ENCODE measurements at regions of chr2 and their contacts with region 1.

Region 1: DNA sequence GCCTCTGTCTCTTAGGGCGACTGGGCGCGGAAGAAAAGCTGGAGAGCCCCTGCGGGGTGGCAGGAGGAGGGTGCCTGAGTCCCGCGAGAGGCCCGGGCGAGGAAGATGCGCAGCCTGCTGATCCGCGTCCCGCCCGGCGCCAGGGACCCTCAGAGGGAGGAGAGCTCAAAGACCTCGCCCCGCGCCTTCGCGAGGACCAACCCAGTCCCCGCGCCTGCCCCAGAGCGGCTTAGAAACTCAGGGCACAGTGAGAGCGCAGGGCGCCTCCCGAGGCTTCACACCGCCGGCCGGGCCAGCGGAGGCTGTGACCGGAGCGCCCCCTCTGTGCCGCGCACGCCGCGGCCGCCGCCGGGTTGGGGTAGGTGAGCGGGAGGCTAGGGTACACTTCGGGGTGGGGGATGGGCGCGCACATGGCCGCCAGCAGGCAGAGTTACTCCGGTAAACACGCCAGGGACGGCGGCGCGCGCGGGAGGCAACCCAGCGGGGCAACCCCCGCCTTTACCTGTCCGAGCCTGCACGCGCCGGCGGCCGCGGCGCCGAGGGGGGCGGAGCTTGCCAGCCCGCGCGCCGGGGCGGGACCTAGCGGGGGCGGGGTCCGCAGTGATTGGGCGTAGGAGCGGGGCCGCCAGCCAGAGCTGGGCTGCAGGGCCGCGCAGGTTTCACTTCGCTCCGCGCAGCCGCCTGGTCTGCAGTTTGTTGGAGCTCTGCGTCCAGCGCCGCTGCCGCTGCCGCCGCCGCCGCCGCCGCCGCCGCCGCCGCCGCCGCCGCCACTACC is at the start of gene BCL2L11:
- DNase-seq: peak; percentile 90
- H3K4me3 Mint-ChIP-seq: peak within 1 kb of the TSS; percentile 91
- H3K27ac Mint-ChIP-seq: peak within 1 kb of the TSS; percentile 93
- H3K4me1 Mint-ChIP-seq: peaks cover 8% of the 10 kb centered on the region
- H3K27me3 Mint-ChIP-seq: no peaks in the 10 kb centered on the region
- CTCF ChIP-seq: peak; percentile 9
- total RNA-seq, gene BCL2L11: 5.8 and 8.4 TPM in 2 replicates

Region 2: GRCh38 chr2:110812726-110813645 is 307.5 kb before region 1 on chr2:
- CTCF ChIA-PET with region 1: interaction called, 16 read pairs
- POLR2A ChIA-PET with region 1: interaction called, 10 read pairs
- intact Hi-C with region 1: loop called (anchors 2 kb)
- DNase-seq: no peak
- H3K4me3 Mint-ChIP-seq: no peak overlapping the region
- H3K27ac Mint-ChIP-seq: no peak overlapping the region
- H3K4me1 Mint-ChIP-seq: peaks cover 14% of the 10 kb centered on the region
- H3K27me3 Mint-ChIP-seq: peaks cover 35% of the 10 kb centered on the region
- CTCF ChIP-seq: no peak

Region 3: DNA sequence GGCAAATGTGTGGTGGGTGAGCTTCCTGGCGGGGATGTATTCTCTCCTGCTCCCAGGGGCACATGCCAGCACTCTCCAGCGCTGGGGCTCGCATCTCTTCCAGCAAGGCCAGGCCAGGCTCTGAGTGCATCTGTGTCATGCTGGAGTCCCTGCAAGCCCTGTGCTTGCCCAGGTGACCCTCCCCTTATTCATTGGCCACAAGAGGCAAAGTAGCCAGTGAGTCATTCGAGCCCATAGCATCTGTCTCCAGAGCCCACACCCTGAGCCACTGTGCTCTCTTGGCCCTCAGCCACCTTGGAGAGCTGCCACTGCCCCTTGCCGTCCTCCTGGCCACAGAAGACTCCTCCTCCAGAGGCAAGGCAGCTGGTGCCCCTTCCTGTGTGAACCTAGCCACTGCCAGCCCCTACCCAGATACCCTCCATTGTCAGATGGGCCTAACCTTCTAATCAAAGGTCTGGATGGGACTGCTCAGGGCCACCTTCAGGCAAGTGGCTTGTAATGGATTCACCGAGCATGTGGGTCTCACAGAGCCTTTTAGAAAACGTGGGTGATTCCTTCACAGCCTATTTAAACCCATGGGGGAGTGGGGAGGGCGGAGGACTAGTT is 250.9 kb before region 1 on chr2:
- CTCF ChIA-PET with region 1: no interaction called
- POLR2A ChIA-PET with region 1: no interaction called
- intact Hi-C with region 1: no loop called
- DNase-seq: peak; percentile 66
- H3K4me3 Mint-ChIP-seq: no peak overlapping the region
- H3K27ac Mint-ChIP-seq: no peak overlapping the region
- H3K4me1 Mint-ChIP-seq: peaks cover 9% of the 10 kb centered on the region
- H3K27me3 Mint-ChIP-seq: peaks cover 42% of the 10 kb centered on the region
- CTCF ChIP-seq: no peak

Region 4: GRCh38 chr2:110886826-110887573 is 233.4 kb before region 1 on chr2:
- CTCF ChIA-PET with region 1: no interaction called
- POLR2A ChIA-PET with region 1: no interaction called
- intact Hi-C with region 1: no loop called
- DNase-seq: no peak
- H3K4me3 Mint-ChIP-seq: no peak overlapping the region
- H3K27ac Mint-ChIP-seq: no peak overlapping the region
- H3K4me1 Mint-ChIP-seq: peaks cover 5% of the 10 kb centered on the region
- H3K27me3 Mint-ChIP-seq: peaks cover 7% of the 10 kb centered on the region
- CTCF ChIP-seq: no peak

Region 5: GRCh38 chr2:111139637-111140317 is 19.3 kb after region 1 on chr2:
- CTCF ChIA-PET with region 1: interaction called, 4 read pairs
- POLR2A ChIA-PET with region 1: interaction called, 25 read pairs
- intact Hi-C with region 1: no loop called
- DNase-seq: peak; percentile 77
- H3K4me3 Mint-ChIP-seq: no peak overlapping the region
- H3K27ac Mint-ChIP-seq: peak overlapping the region; percentile 42
- H3K4me1 Mint-ChIP-seq: peaks cover 21% of the 10 kb centered on the region
- H3K27me3 Mint-ChIP-seq: no peaks in the 10 kb centered on the region
- CTCF ChIP-seq: no peak

Region 6: GRCh38 chr2:111168528-111169239 is 48.2 kb after region 1 on chr2:
- CTCF ChIA-PET with region 1: interaction called, 5 read pairs
- POLR2A ChIA-PET with region 1: interaction called, 23 read pairs
- intact Hi-C with region 1: no loop called
- DNase-seq: peak; percentile 76
- H3K4me3 Mint-ChIP-seq: peak overlapping the region; percentile 14
- H3K27ac Mint-ChIP-seq: no peak overlapping the region
- H3K4me1 Mint-ChIP-seq: peaks cover 22% of the 10 kb centered on the region
- H3K27me3 Mint-ChIP-seq: no peaks in the 10 kb centered on the region
- CTCF ChIP-seq: no peak

Region 7: DNA sequence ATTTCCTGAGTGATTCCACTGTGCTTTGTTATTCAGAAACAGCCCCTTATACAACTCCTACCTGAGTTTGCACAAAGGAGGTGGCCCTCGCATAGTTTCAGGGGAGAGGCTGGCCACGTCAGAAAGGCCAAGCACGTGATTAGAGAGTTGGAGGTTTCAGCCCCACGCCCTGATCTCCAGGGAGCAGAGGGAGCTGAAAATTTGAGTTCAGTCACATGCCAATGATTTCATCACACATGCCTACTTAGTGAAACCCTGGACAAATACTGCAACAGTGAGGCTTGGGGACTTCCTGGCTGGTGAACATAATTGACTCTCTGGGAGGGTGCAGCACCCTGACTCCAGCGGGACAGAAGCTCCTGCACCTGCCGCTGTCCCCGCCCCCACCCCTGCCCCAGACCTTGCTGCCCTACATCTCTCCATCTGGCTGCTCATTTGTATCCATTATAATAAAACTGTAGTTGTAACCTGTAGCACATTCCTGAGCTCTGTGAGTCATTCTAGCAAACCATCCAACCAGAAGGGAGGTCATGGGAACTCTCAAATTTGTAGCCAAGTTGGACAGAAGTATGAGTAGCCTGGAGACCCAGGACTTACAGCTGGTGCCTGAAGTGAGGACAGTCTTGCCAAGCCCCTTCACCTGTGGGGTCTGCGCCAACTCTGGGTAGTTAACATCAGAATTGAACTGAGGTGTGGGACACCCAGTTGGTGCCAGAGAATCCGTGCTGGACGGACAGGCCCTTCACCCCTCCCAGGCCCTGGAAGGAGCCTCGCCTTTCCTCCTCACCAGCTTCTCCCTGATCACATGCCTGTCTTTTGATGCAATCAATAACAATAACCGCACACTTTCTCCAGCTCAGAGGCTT is 539.2 kb after region 1 on chr2:
- CTCF ChIA-PET with region 1: no interaction called
- POLR2A ChIA-PET with region 1: interaction called, 14 read pairs
- intact Hi-C with region 1: no loop called
- DNase-seq: peak; percentile 97
- H3K4me3 Mint-ChIP-seq: peak overlapping the region; percentile 45
- H3K27ac Mint-ChIP-seq: peak overlapping the region; percentile 99
- H3K4me1 Mint-ChIP-seq: peaks cover 50% of the 10 kb centered on the region
- H3K27me3 Mint-ChIP-seq: no peaks in the 10 kb centered on the region
- CTCF ChIP-seq: no peak

Region 8: DNA sequence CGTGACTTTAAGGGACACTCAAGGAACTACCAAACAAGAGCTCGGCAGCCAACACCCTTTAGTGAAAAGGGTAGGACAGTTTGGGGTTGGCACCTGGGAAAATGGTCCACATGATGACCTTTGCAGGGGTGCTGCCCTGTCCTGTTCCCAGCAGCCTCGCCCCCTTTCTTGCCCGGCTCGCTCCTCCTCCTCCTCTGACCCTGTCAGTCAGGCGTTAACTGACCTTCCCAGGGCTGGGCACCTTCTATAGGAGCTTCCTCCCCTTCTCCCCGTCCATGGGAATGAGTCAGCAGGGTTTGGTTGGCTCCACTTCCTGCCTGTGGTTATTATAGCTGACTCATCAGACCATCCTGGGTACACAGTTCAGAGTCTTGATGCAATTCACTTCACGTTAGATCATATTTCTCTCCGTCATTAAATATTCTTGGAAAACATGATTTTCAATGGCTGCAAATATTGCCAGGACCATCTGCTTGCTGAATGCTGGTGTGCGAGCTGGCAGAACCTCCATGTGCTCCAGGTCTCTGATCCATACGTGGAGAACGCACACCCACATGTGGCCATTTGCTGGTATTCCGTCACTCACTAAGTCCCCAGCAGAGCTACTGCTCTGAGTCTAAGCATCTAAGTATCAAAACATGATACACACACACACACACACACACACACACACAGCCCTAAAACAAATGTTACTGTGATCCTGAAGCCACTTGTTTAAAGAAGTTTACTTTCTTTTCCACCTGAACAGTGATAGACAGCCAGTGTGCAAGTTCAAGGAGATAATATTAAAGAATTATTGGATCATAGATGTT is 578.5 kb after region 1 on chr2:
- CTCF ChIA-PET with region 1: interaction called, 4 read pairs
- POLR2A ChIA-PET with region 1: interaction called, 6 read pairs
- intact Hi-C with region 1: loop called (anchors 1 kb)
- DNase-seq: peak; percentile 100
- H3K4me3 Mint-ChIP-seq: peak overlapping the region; percentile 63
- H3K27ac Mint-ChIP-seq: peak overlapping the region; percentile 86
- H3K4me1 Mint-ChIP-seq: peaks cover 31% of the 10 kb centered on the region
- H3K27me3 Mint-ChIP-seq: no peaks in the 10 kb centered on the region
- CTCF ChIP-seq: peak; percentile 43